ENCODE measurements at regions of chr13 and their contacts with region 1.

Region 1: GRCh38 chr13:36346222-36347083 is at the start of gene SPART:
- DNase-seq: peak; percentile 78 to 95 (median 85)
- ATAC-seq: peak; percentile 85
- H3K4me3 ChIP-seq: peak within 1 kb of the TSS; percentile 84
- H3K4me3 Mint-ChIP-seq: peak within 1 kb of the TSS; percentile 99
- H3K27ac ChIP-seq: peak within 1 kb of the TSS; percentile 77 to 96
- H3K27ac Mint-ChIP-seq: peak within 1 kb of the TSS; percentile 100
- H3K4me1 ChIP-seq: peaks cover 20% of the 10 kb centered on the region
- H3K4me1 Mint-ChIP-seq: peaks cover 43% of the 10 kb centered on the region
- H3K27me3 ChIP-seq: no peaks in the 10 kb centered on the region
- H3K27me3 Mint-ChIP-seq: peaks cover 18% of the 10 kb centered on the region
- CTCF ChIP-seq: peak; percentile 91
- total RNA-seq, gene SPART: 22.0 to 22.9 TPM

Region 2: GRCh38 chr13:35994131-35994966 is 352.1 kb before region 1 on chr13:
- CTCF ChIA-PET with region 1: no interaction called
- POLR2A ChIA-PET with region 1: no interaction called
- intact Hi-C with region 1: no loop called
- DNase-seq: no peak
- ATAC-seq: no peak
- H3K4me3 ChIP-seq: no peak overlapping the region
- H3K4me3 Mint-ChIP-seq: no peak overlapping the region
- H3K27ac ChIP-seq: no peak overlapping the region
- H3K27ac Mint-ChIP-seq: no peak overlapping the region
- H3K4me1 ChIP-seq: no peaks in the 10 kb centered on the region
- H3K4me1 Mint-ChIP-seq: no peaks in the 10 kb centered on the region
- H3K27me3 ChIP-seq: no peaks in the 10 kb centered on the region
- H3K27me3 Mint-ChIP-seq: no peaks in the 10 kb centered on the region
- CTCF ChIP-seq: no peak

Region 3: DNA sequence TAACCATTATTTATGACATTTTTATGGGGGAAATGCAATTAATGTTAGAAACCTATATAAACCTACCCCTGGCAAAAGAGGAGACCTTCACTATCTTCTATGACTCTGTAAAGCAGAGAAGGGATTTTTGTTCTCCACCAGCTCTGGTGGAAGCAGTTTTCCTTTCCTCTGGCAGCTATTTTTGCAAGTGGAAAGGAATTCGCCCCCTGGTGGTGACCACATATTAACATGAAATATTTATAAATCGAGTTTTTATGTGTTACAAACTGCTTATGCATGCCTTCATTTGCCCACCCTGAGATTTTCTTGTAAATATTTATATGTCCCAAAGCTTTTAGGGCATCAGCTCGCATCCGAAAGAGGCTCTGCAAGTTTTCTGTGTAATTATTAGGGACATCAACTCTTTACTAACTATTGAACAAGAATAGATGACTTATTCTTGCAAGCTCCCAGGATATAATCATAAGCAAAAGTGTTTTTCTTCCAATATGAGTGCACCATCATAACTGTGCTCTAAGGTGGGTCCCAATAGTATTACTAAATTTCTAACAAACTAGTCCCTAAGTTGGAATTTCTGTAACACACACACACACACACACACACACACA is 389.8 kb after region 1 on chr13:
- CTCF ChIA-PET with region 1: interaction called, 10 read pairs
- POLR2A ChIA-PET with region 1: interaction called, 3 read pairs
- intact Hi-C with region 1: loop called (anchors 1 kb)
- DNase-seq: peak in 9 of 14 experiments; percentile 2 to 58 (median 14)
- ATAC-seq: no peak
- H3K4me3 ChIP-seq: no peak overlapping the region
- H3K4me3 Mint-ChIP-seq: no peak overlapping the region
- H3K27ac ChIP-seq: no peak overlapping the region
- H3K27ac Mint-ChIP-seq: no peak overlapping the region
- H3K4me1 ChIP-seq: no peaks in the 10 kb centered on the region
- H3K4me1 Mint-ChIP-seq: no peaks in the 10 kb centered on the region
- H3K27me3 ChIP-seq: peaks cover 0 to 3% of the 10 kb centered on the region in 2 experiments
- H3K27me3 Mint-ChIP-seq: no peaks in the 10 kb centered on the region
- CTCF ChIP-seq: peak; percentile 66

Region 4: GRCh38 chr13:36818804-36819738 is 472.6 kb after region 1 on chr13 and contains the start of gene RFXAP:
- CTCF ChIA-PET with region 1: no interaction called
- POLR2A ChIA-PET with region 1: no interaction called
- intact Hi-C with region 1: loop called (anchors 2 to 5 kb)
- DNase-seq: peak; percentile 83 to 96 (median 90)
- ATAC-seq: peak; percentile 89
- H3K4me3 ChIP-seq: peak within 1 kb of the TSS; percentile 83
- H3K4me3 Mint-ChIP-seq: peak within 1 kb of the TSS; percentile 89
- H3K27ac ChIP-seq: peak within 1 kb of the TSS; percentile 38 to 53
- H3K27ac Mint-ChIP-seq: peak within 1 kb of the TSS; percentile 90
- H3K4me1 ChIP-seq: peaks cover 29% of the 10 kb centered on the region
- H3K4me1 Mint-ChIP-seq: peaks cover 56% of the 10 kb centered on the region
- H3K27me3 ChIP-seq: no peaks in the 10 kb centered on the region
- H3K27me3 Mint-ChIP-seq: peaks cover 7% of the 10 kb centered on the region
- CTCF ChIP-seq: peak; percentile 28
- total RNA-seq, gene RFXAP: 5.8 to 6.0 TPM

Region 5: GRCh38 chr13:37058910-37059847 is 712.7 kb after region 1 on chr13 and contains the start of gene SUPT20H:
- CTCF ChIA-PET with region 1: no interaction called
- POLR2A ChIA-PET with region 1: no interaction called
- intact Hi-C with region 1: loop called in 1 of 2 experiments (anchors 5 kb)
- DNase-seq: peak; percentile 89 to 96 (median 94)
- ATAC-seq: peak; percentile 91
- H3K4me3 ChIP-seq: peak within 1 kb of the TSS; percentile 96
- H3K4me3 Mint-ChIP-seq: peak within 1 kb of the TSS; percentile 95
- H3K27ac ChIP-seq: peak within 1 kb of the TSS; percentile 93
- H3K27ac Mint-ChIP-seq: peak within 1 kb of the TSS; percentile 99
- H3K4me1 ChIP-seq: peaks cover 16% of the 10 kb centered on the region
- H3K4me1 Mint-ChIP-seq: peaks cover 43% of the 10 kb centered on the region
- H3K27me3 ChIP-seq: no peaks in the 10 kb centered on the region
- H3K27me3 Mint-ChIP-seq: no peaks in the 10 kb centered on the region
- CTCF ChIP-seq: no peak
- total RNA-seq, gene SUPT20H: 61.7 to 63.1 TPM